Activated CD8-positive, alpha-beta T cell treated with anti-CD3 and anti-CD28 coated beads for 36 hours (primary cell): ENCODE measurements at regions of chr4 and their contacts with region 1.

Region 1: DNA sequence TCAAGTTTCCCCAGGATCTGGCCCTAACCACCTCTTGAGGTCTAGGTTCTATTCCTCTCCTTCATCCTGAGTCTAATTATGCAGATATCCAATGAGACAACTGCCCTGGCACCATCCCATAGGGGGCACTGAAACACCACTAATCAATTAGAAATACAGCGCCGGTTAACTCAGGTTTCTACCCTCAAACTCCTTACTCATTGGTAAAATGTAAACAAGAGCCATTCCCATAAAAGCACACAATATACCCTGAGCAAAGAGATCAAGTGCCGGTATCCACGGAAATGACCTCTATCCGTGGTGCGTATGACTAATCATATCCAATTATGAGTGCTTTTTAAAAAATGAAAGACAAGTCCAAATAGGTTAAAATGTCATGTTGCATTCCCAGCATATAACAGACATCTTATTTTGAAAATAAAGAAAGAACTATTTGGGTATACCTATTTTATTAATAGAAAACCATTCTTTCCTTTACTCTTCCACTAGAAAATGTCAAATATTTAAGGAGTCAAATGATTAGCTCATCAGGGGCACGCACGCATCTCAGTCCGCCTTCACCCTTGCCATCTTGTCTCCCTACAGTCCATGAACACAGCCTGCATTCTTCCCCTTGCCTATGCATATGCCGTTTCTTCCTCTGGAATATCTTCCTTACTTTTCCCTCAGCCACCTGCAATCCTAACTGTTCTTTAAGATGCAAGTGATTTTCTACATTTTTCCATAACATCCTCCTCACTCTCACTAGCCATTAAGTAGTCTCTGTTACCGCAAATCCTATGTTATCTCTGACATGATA is 141.1 kb downstream of the MAML3 start:
- DNase-seq: peak; percentile 70
- ATAC-seq: peak; percentile 83
- H3K4me3 Mint-ChIP-seq: no peak overlapping the region
- H3K27ac Mint-ChIP-seq: no peak overlapping the region
- H3K4me1 Mint-ChIP-seq: peaks cover 8% of the 10 kb centered on the region
- H3K27me3 Mint-ChIP-seq: peaks cover 3% of the 10 kb centered on the region
- CTCF ChIP-seq: peak; percentile 64

Region 2: GRCh38 chr4:140243278-140243753 is 230.4 kb after region 1 on chr4:
- CTCF ChIA-PET with region 1: interaction called, 10 read pairs
- POLR2A ChIA-PET with region 1: no interaction called
- intact Hi-C with region 1: no loop called
- DNase-seq: peak; percentile 46
- ATAC-seq: peak; percentile 74
- H3K4me3 Mint-ChIP-seq: peak overlapping the region; percentile 44
- H3K27ac Mint-ChIP-seq: peak overlapping the region; percentile 44
- H3K4me1 Mint-ChIP-seq: peaks cover 20% of the 10 kb centered on the region
- H3K27me3 Mint-ChIP-seq: peaks cover 2% of the 10 kb centered on the region
- CTCF ChIP-seq: no peak

Region 3: GRCh38 chr4:140286456-140286855 is 273.6 kb after region 1 on chr4:
- CTCF ChIA-PET with region 1: no interaction called
- POLR2A ChIA-PET with region 1: no interaction called
- intact Hi-C with region 1: no loop called
- DNase-seq: no peak
- ATAC-seq: no peak
- H3K4me3 Mint-ChIP-seq: no peak overlapping the region
- H3K27ac Mint-ChIP-seq: no peak overlapping the region
- H3K4me1 Mint-ChIP-seq: no peaks in the 10 kb centered on the region
- H3K27me3 Mint-ChIP-seq: peaks cover 5% of the 10 kb centered on the region
- CTCF ChIP-seq: no peak